PC-3 (cell line): ENCODE measurements at regions of chr17 and their contacts with region 1.

Region 1: GRCh38 chr17:72120642-72121163 is at the start of gene SOX9:
- DNase-seq: peak; percentile 99
- ATAC-seq: peak; percentile 76
- H3K4me3 ChIP-seq: peak within 1 kb of the TSS; percentile 85
- H3K27ac ChIP-seq: peak within 1 kb of the TSS; percentile 83
- H3K4me1 ChIP-seq: peaks cover 37% of the 10 kb centered on the region
- H3K27me3 ChIP-seq: no peaks in the 10 kb centered on the region
- CTCF ChIP-seq: no peak
- total RNA-seq, gene SOX9: 119 and 151 TPM in 2 replicates

Region 2: GRCh38 chr17:71412803-71413202 is 707.9 kb before region 1 on chr17:
- CTCF ChIA-PET with region 1: no interaction called
- POLR2A ChIA-PET with region 1: interaction called, 31 read pairs
- intact Hi-C with region 1: no loop called
- DNase-seq: peak; percentile 99
- ATAC-seq: peak; percentile 98
- H3K4me3 ChIP-seq: peak overlapping the region; percentile 17
- H3K27ac ChIP-seq: peak overlapping the region; percentile 93
- H3K4me1 ChIP-seq: peaks cover 43% of the 10 kb centered on the region
- H3K27me3 ChIP-seq: no peaks in the 10 kb centered on the region
- CTCF ChIP-seq: no peak

Region 3: DNA sequence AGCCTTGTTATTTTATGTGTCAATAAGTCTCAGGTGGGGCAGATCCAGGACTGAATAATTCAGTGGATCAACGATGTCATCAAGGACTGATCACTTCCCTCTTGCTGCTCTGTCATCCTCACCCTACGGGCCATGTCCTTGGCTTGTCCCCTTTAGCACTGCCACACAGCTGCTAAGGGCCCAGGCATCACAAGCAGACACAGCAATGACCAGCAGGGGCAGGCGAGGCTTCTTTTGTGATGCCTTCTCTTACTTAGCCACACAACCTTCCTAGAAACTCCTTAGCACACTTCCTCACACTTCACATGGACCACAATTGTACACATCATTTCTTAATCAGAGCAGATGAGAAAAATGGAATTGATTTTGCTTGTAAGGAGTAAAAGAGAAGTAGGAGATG is 356.2 kb before region 1 on chr17:
- CTCF ChIA-PET with region 1: no interaction called
- POLR2A ChIA-PET with region 1: no interaction called
- intact Hi-C with region 1: loop called (anchors 2 kb)
- DNase-seq: peak; percentile 53
- ATAC-seq: peak; percentile 62
- H3K4me3 ChIP-seq: no peak overlapping the region
- H3K27ac ChIP-seq: no peak overlapping the region
- H3K4me1 ChIP-seq: peaks cover 13% of the 10 kb centered on the region
- H3K27me3 ChIP-seq: no peaks in the 10 kb centered on the region
- CTCF ChIP-seq: peak; percentile 71

Region 4: GRCh38 chr17:71959154-71959553 is 161.5 kb before region 1 on chr17:
- CTCF ChIA-PET with region 1: no interaction called
- POLR2A ChIA-PET with region 1: no interaction called
- intact Hi-C with region 1: loop called (anchors 1 kb)
- DNase-seq: peak; percentile 74
- ATAC-seq: peak; percentile 69
- H3K4me3 ChIP-seq: no peak overlapping the region
- H3K27ac ChIP-seq: no peak overlapping the region
- H3K4me1 ChIP-seq: no peaks in the 10 kb centered on the region
- H3K27me3 ChIP-seq: no peaks in the 10 kb centered on the region
- CTCF ChIP-seq: peak; percentile 91

Region 5: GRCh38 chr17:72388765-72389473 is 268.2 kb after region 1 on chr17:
- CTCF ChIA-PET with region 1: interaction called, 9 read pairs
- POLR2A ChIA-PET with region 1: interaction called, 17 read pairs
- intact Hi-C with region 1: no loop called
- DNase-seq: peak; percentile 89
- ATAC-seq: peak; percentile 2
- H3K4me3 ChIP-seq: no peak overlapping the region
- H3K27ac ChIP-seq: peak overlapping the region; percentile 97
- H3K4me1 ChIP-seq: peaks cover 84% of the 10 kb centered on the region
- H3K27me3 ChIP-seq: no peaks in the 10 kb centered on the region
- CTCF ChIP-seq: peak; percentile 62

Region 6: DNA sequence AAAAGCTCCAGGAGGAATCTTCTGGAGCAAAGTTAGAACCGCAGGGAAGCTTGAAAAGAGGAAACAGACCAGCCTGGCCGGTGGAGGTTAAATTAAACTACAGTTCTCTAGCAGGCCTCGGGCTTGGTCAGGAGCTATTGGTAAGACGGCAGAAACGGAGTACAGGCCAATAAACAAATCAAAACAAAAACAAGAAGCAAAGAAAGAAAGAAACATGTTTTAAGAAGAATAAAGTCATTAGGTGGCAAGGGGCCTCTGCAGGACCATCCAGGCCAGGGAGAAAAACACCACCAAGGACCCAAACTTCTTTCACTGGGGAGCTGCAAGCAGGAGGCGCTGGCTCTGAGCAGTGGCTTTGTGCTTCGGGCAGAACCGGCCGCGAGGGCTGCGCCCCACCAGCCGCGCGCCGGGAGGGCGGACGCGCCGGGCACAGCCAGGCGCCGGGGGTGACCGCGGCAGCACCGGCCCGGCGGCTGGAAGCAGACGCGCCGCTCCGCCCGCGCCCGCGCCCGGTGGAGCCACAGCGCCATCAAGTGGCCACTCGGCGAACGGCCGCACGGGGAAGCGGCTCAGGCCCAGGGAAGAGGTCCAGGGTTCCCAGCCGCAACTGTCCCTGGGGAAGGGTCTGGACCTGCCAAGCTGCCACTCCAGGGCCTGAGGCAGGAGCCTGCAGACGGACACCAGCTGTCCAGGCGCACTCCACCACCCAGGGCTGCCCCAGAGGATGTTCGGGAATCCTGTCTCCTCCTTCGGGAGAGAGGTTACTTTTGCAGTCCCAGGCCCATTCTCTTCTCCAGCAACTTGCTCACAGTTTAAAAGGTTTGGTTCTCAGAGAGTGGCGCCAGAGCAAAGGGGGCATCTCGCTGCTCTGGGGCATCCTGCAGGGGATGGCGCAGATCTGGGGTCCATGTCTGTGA is 419.5 kb after region 1 on chr17:
- CTCF ChIA-PET with region 1: interaction called, 14 read pairs
- POLR2A ChIA-PET with region 1: interaction called, 16 read pairs
- intact Hi-C with region 1: loop called (anchors 1 kb)
- DNase-seq: peak; percentile 90
- ATAC-seq: peak; percentile 98
- H3K4me3 ChIP-seq: peak overlapping the region; percentile 52
- H3K27ac ChIP-seq: peak overlapping the region; percentile 70
- H3K4me1 ChIP-seq: peaks cover 16% of the 10 kb centered on the region
- H3K27me3 ChIP-seq: no peaks in the 10 kb centered on the region
- CTCF ChIP-seq: peak; percentile 79